ENCODE measurements at regions of chr4 and their contacts with region 1.

Region 1: DNA sequence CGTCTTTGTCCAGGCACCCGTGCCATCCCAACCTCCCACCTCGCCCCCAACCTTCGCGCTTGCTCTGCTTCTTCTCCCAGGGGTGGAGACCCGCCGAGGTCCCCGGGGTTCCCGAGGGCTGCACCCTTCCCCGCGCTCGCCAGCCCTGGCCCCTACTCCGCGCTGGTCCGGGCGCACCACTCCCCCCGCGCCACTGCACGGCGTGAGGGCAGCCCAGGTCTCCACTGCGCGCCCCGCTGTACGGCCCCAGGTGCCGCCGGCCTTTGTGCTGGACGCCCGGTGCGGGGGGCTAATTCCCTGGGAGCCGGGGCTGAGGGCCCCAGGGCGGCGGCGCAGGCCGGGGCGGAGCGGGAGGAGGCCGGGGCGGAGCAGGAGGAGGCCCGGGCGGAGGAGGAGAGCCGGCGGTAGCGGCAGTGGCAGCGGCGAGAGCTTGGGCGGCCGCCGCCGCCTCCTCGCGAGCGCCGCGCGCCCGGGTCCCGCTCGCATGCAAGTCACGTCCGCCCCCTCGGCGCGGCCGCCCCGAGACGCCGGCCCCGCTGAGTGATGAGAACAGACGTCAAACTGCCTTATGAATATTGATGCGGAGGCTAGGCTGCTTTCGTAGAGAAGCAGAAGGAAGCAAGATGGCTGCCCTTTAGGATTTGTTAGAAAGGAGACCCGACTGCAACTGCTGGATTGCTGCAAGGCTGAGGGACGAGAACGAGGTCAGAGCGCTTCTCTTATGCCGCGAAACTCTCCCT is at the start of gene TET2:
- DNase-seq: peak; percentile 84
- H3K4me3 ChIP-seq: peak within 1 kb of the TSS; percentile 84
- H3K27ac ChIP-seq: peak within 1 kb of the TSS; percentile 86
- H3K4me1 ChIP-seq: peaks cover 54% of the 10 kb centered on the region
- H3K27me3 ChIP-seq: no peaks in the 10 kb centered on the region
- CTCF ChIP-seq: peak; percentile 22
- total RNA-seq, gene TET2: 11.9 TPM

Region 2: DNA sequence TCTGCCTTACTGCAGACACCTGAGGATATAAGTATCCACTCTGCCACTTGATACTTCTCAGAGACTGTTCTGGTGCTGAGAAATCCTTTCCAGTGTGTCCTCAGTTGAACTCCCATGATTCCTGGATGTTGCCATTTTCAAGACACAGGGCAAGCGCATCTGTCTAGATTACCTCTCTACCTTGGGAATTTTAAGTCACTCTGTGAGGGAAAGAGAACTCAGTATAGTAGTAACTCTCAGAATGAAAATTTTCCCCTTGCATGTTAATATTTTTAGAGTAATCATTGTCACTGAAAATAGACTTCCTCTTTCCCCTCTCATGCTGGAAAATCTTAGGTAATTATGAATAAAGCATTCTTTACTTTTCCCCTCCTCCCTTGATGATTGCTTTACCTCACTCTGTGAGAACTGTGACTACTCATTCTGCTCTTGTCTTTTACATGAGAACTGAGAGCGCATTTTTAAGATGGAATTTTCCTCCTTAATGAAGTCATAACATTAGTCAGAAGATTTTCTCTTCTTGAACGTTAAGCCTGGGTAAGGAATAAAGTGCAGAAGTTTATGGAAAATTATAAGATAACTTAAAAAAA is 45.3 kb after region 1 on chr4:
- intact Hi-C with region 1: loop called (anchors 10 kb)
- DNase-seq: no peak
- H3K4me3 ChIP-seq: peak overlapping the region; percentile 13
- H3K27ac ChIP-seq: peak overlapping the region; percentile 53
- H3K4me1 ChIP-seq: peaks cover 81% of the 10 kb centered on the region
- H3K27me3 ChIP-seq: no peaks in the 10 kb centered on the region
- CTCF ChIP-seq: no peak

Region 3: GRCh38 chr4:105246712-105247111 is 100.3 kb after region 1 on chr4:
- intact Hi-C with region 1: loop called (anchors 10 kb)
- DNase-seq: no peak
- H3K4me3 ChIP-seq: no peak overlapping the region
- H3K27ac ChIP-seq: no peak overlapping the region
- H3K4me1 ChIP-seq: peaks cover 13% of the 10 kb centered on the region
- H3K27me3 ChIP-seq: no peaks in the 10 kb centered on the region
- CTCF ChIP-seq: no peak

Region 4: DNA sequence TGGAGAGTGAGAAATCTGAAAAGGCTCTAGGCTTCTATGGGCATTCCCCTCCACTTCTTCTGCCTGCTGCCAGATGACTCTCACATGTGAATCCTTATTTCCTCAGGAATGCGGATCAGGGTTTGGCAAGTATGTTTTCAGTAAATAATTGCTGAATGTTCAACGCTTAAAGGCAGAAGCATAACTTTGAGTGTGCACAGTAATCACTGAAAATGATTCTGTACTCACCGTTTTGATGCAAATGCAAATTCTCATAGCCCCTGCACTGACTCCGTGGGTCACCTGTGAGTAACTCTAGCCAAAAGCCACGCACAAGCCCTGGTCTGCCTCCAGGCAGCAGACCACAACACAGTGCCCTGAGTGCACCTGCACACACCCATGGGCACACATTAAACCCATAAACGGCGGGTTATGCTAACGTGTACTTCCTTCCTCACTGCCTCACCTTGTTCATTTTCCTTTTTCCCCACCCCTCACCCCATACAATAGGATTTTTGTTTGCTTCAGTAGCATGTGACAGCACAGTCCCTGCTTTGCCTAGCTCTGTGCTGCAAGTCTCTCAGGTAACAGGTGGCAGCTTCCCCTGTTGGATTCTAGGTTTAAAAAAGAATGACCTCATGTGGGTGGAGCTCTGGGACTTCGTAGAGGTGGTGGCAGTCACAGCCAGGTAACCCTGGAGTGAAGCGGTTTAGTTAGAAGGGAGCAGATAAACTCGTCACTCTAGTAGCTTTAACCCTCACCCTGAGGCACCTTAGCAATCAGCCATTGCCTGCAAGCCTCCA is 405.7 kb after region 1 on chr4 and contains the start of gene ARHGEF38:
- intact Hi-C with region 1: no loop called
- DNase-seq: no peak
- H3K4me3 ChIP-seq: no peak within 1 kb of the TSS
- H3K27ac ChIP-seq: no peak within 1 kb of the TSS
- H3K4me1 ChIP-seq: peaks cover 2% of the 10 kb centered on the region
- H3K27me3 ChIP-seq: no peaks in the 10 kb centered on the region
- CTCF ChIP-seq: no peak
- total RNA-seq, gene ARHGEF38: not detected